Activated CD4-positive, alpha-beta T cell treated with anti-CD3 and anti-CD28 coated beads, Interleukin-2, amount 10 ng/mL, durations not matched to agents 7 days and 5 days (primary cell): ENCODE measurements at regions of chr17 and their contacts with region 1.

Region 1: GRCh38 chr17:68435876-68436842 is 21.1 kb downstream of the WIPI1 start:
- DNase-seq: peak; percentile 91
- H3K4me3 Mint-ChIP-seq: peak overlapping the region; percentile 62
- H3K27ac Mint-ChIP-seq: peak overlapping the region; percentile 95
- H3K4me1 Mint-ChIP-seq: peaks cover 76% of the 10 kb centered on the region
- H3K27me3 Mint-ChIP-seq: no peaks in the 10 kb centered on the region

Region 2: DNA sequence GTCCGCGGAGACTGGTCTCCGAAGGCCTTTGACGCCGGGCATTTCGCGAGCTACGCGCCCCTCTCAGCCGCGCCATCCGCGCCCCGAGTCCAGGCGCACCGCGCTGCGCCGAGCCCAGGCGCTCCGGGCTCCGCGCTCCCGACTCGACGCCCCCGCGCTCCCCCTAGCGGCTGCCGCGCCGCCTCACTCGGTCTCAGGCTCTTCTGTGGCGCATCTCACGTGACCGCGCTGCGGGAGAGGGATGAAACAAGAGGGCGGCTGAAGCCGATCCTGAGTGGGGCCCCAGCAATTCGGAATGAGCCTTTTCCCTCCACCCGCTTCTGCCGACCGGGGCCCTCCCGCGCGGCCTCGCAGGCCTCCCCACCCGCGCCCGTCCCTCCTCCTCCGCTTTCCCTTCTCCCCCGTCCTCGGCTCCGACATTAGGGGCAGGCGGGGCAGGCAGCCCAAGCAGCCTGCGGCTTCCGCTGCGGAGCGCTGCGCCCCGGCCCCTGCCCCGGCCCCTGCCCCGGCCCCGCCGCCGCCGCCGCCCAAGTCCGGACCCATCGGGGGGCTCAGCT is 230.8 kb before region 1 on chr17:
- CTCF ChIA-PET with region 1: interaction called, 15 read pairs
- POLR2A ChIA-PET with region 1: no interaction called
- DNase-seq: peak; percentile 93
- H3K4me3 Mint-ChIP-seq: peak overlapping the region; percentile 87
- H3K27ac Mint-ChIP-seq: peak overlapping the region; percentile 96
- H3K4me1 Mint-ChIP-seq: peaks cover 32% of the 10 kb centered on the region
- H3K27me3 Mint-ChIP-seq: peaks cover 7% of the 10 kb centered on the region

Region 3: DNA sequence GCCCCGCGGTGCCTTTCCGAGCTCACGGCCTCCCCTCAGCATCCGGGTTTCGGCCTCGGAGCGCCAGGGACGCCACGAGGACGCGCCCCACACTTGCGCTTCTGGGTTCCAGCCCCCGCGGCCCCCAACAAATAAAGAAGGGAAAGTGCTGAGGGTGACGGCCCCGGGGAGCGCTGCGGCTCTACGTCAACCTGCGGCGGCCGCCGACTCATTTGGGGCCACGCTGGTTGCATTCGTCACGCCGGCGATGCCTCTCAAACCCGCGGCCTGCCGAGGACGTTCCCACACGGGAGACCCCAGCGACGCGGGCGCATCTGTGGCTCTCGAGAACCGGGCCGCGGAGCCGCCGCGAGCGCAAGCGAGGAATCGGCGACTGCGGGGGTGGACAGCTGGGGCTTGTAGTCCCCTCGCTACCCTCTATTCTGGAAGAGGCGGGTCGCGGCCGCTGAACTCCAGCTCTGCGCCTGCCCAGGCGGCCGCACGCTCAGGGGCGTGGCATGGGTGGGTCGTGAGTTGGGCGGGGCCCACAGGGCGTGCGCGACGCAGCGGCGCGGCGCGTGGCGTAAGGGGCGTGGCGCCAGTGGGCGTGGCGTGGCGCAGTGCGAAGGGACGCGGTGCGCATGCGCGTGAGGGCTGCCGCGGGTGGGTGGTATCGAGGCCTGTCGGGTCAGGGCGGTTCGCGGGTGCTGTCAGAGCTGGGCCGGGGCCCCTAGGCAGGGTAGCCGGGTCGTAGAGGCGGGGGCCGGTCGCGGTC is 188.5 kb before region 1 on chr17 and contains the start of gene AMZ2:
- CTCF ChIA-PET with region 1: interaction called, 23 read pairs
- POLR2A ChIA-PET with region 1: no interaction called
- DNase-seq: peak; percentile 94
- H3K4me3 Mint-ChIP-seq: peak within 1 kb of the TSS; percentile 91
- H3K27ac Mint-ChIP-seq: peak within 1 kb of the TSS; percentile 87
- H3K4me1 Mint-ChIP-seq: peaks cover 42% of the 10 kb centered on the region
- H3K27me3 Mint-ChIP-seq: no peaks in the 10 kb centered on the region
- total RNA-seq, gene AMZ2: 72.5 to 82.3 TPM

Region 4: GRCh38 chr17:68260051-68260762 is 176.0 kb before region 1 on chr17:
- CTCF ChIA-PET with region 1: interaction called, 15 read pairs
- POLR2A ChIA-PET with region 1: interaction called, 4 read pairs
- DNase-seq: no peak
- H3K4me3 Mint-ChIP-seq: peak overlapping the region; percentile 64
- H3K27ac Mint-ChIP-seq: peak overlapping the region; percentile 90
- H3K4me1 Mint-ChIP-seq: peaks cover 71% of the 10 kb centered on the region
- H3K27me3 Mint-ChIP-seq: no peaks in the 10 kb centered on the region

Region 5: GRCh38 chr17:68398691-68399637 is 37.2 kb before region 1 on chr17:
- CTCF ChIA-PET with region 1: interaction called, 25 read pairs
- POLR2A ChIA-PET with region 1: interaction called, 3 read pairs
- DNase-seq: peak; percentile 38
- H3K4me3 Mint-ChIP-seq: no peak overlapping the region
- H3K27ac Mint-ChIP-seq: peak overlapping the region; percentile 90
- H3K4me1 Mint-ChIP-seq: peaks cover 41% of the 10 kb centered on the region
- H3K27me3 Mint-ChIP-seq: no peaks in the 10 kb centered on the region

Region 6: DNA sequence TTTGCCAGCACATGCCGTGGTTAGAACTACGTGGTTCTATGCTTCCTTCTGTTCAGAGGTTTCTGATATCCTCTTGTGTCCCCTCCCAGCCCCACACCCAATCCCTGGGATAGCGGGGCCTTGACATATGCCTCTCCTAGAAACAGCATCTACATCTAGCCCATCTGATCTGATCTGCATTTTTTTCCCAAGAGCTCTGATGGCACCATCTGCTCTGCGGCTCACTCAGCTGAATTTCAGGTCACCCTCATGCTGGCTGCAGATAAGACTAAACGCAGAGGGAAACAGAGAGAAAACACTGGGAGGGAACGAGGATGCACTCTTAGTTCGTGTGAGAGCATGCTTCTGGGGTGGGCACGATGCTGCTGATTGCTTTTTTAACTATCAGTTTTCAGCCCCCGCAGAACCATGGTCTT is 10.5 kb after region 1 on chr17:
- CTCF ChIA-PET with region 1: interaction called, 31 read pairs
- POLR2A ChIA-PET with region 1: no interaction called
- DNase-seq: no peak
- H3K4me3 Mint-ChIP-seq: no peak overlapping the region
- H3K27ac Mint-ChIP-seq: no peak overlapping the region
- H3K4me1 Mint-ChIP-seq: peaks cover 24% of the 10 kb centered on the region
- H3K27me3 Mint-ChIP-seq: no peaks in the 10 kb centered on the region

Region 7: GRCh38 chr17:68457539-68458259 is 21.5 kb after region 1 on chr17:
- CTCF ChIA-PET with region 1: interaction called, 24 read pairs
- POLR2A ChIA-PET with region 1: interaction called, 4 read pairs
- DNase-seq: peak; percentile 98
- H3K4me3 Mint-ChIP-seq: peak overlapping the region; percentile 75
- H3K27ac Mint-ChIP-seq: peak overlapping the region; percentile 88
- H3K4me1 Mint-ChIP-seq: peaks cover 79% of the 10 kb centered on the region
- H3K27me3 Mint-ChIP-seq: no peaks in the 10 kb centered on the region